H1 (cell line): ENCODE measurements at regions of chr17 and their contacts with region 1.

Region 1: DNA sequence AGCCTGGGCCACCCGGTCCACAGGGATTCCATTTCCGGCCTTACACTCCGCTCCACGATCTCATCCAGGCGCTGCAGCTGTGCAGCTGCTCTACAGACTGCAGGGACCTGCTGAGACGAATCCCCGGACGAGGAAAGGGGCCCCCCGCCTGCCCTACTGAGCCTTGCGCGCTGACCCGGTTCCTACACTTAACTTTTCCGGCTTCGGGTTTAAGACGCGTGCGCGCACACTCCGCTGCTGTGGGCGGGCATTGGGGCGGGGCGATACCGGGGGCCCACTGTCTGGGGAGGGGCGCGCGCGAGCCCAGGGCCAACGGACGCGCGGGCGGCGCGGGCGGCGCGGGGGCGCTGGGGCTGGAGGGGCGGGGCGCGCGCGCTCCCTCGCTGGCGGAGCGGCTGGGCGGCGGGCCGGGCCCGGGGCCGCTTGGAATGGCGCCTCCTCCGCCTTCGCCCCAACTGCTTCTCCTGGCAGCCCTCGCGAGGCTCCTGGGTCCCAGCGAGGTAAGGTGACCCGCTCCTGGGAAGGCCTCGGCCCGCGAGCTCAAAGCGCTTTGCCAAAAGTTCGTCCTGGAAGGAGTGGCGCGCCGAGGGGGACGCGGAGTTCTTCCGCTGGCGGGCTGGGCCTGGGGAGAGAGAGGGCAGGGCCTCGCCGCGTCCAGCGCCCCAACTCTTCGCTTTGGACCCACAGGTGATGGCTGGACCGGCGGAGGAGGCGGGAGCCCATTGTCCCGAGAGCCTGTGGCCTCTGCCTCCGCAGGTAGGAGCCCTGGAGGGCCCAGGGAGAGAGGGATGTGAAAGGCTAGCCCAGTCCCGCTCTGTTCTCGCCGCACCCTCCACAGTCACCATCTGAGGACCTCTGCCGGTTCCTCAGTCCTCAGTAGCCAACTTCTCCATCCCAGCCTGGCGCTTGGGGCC is at the start of gene TP53I13:
- DNase-seq: peak in 1 of 2 experiments; percentile 87
- H3K4me3 ChIP-seq: peak within 1 kb of the TSS; percentile 66 to 76 (median 72)
- H3K27ac ChIP-seq: no peak within 1 kb of the TSS
- H3K4me1 ChIP-seq: peaks cover 6 to 15% (median 11%) of the 10 kb centered on the region in 4 experiments; a peak in 6 of 7 replicates
- H3K27me3 ChIP-seq: peaks cover 11 to 48% (median 34%) of the 10 kb centered on the region in 4 experiments
- CTCF ChIP-seq: no peak
- EP300 ChIP-seq: no peak
- POLR2A ChIP-seq: no peak
- RAD21 ChIP-seq: no peak
- total RNA-seq, gene TP53I13: 21.1 and 22.4 TPM in 2 replicates

Region 2: DNA sequence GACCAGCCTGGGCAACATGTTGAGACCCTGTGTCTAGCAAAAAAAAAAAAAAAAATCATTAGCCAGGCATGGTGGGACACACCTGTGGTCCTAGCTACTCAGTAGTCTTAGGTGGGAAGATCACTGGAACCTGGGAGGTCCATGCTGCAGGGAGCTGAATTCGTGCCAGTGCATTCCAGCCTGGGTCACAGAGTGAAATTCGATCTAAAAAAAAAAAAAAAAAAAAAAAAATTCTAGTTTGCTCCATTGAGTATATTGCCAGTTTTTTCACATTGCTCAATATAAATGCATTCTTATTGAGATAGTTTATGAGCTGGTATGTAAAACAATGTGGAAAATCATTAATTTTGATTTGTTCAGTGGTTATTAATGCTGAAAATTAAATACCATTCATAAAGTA is 53.8 kb before region 1 on chr17:
- CTCF ChIA-PET with region 1: no interaction called
- POLR2A ChIA-PET with region 1: no interaction called
- DNase-seq: no peak
- H3K4me3 ChIP-seq: no peak overlapping the region
- H3K27ac ChIP-seq: no peak overlapping the region
- H3K4me1 ChIP-seq: no peaks in the 10 kb centered on the region
- H3K27me3 ChIP-seq: no peaks in the 10 kb centered on the region
- CTCF ChIP-seq: no peak
- EP300 ChIP-seq: no peak
- POLR2A ChIP-seq: no peak
- RAD21 ChIP-seq: no peak

Region 3: DNA sequence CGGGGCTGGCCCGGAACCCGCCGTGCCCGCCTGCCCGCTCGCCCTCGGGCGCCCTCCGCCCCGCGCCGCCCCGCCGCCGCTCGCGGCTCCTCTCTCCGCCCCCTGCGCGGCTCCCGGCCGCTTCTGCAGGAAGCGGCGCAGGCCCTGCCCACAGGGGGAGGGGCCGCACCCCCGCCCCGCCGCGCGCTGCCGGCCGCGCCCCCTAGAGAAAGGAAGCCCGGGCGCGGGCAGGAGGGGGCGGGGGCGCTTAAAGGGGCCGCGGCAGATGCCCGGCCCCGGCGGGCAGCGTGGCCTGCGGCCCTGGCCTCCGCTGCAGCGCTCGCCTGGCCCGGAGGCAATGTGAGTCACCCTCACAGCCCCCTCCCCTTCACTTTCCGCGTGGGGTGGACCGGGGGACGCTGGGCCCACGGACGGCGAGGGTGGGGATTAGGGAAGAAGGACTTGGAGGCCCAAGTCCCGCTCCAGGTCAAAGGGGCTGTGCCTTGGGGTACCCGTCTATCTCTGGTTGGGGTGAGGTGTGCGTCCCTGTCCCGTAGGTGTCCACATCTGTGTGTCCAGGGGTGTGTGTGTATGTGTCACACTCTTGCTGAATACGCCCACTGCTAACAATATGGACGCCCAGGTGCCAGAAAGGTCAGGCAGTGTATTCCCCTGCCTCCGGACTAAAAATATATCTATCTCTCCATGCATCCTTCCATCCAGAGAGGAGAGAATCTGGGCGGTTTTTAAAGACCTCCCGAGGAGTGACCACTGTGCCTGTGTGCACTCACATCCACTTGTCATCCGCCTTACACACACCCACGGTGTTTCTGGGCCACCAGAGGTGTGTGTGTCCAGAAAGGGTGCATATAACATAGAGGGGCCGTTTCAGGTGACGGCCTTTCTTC is 21.2 kb after region 1 on chr17 and contains the start of gene GIT1:
- CTCF ChIA-PET with region 1: interaction called, 167 read pairs
- POLR2A ChIA-PET with region 1: interaction called, 9 read pairs
- DNase-seq: peak in 1 of 2 experiments; percentile 87
- H3K4me3 ChIP-seq: peak within 1 kb of the TSS; percentile 64 to 82 (median 75)
- H3K27ac ChIP-seq: no peak within 1 kb of the TSS
- H3K4me1 ChIP-seq: peaks cover 4 to 45% (median 38%) of the 10 kb centered on the region in 4 experiments
- H3K27me3 ChIP-seq: peaks cover 0 to 6% (median 5%) of the 10 kb centered on the region in 4 experiments; a peak in 2 of 7 replicates
- CTCF ChIP-seq: peak in 1 of 3 experiments; percentile 13; a peak in 1 of 4 replicates
- EP300 ChIP-seq: peak in 1 of 2 experiments; percentile 25; a peak in 1 of 3 replicates
- POLR2A ChIP-seq: no peak; a peak in 1 of 3 replicates
- RAD21 ChIP-seq: no peak
- total RNA-seq, gene GIT1: 60.6 and 62.4 TPM in 2 replicates